A673 (cell line): ENCODE measurements at regions of chr5 and their contacts with region 1.

Region 1: GRCh38 chr5:108472237-108472636 is 90.3 kb upstream of the FBXL17 start:
- DNase-seq: no peak
- H3K4me3 ChIP-seq: no peak overlapping the region
- H3K27ac ChIP-seq: no peak overlapping the region
- H3K4me1 ChIP-seq: no peaks in the 10 kb centered on the region
- H3K27me3 ChIP-seq: no peaks in the 10 kb centered on the region
- CTCF ChIP-seq: no peak

Region 2: GRCh38 chr5:108260117-108260857 is 211.9 kb before region 1 on chr5:
- CTCF ChIA-PET with region 1: no interaction called
- POLR2A ChIA-PET with region 1: no interaction called
- intact Hi-C with region 1: loop called (anchors 10 kb)
- DNase-seq: peak; percentile 78
- H3K4me3 ChIP-seq: no peak overlapping the region
- H3K27ac ChIP-seq: no peak overlapping the region
- H3K4me1 ChIP-seq: no peaks in the 10 kb centered on the region
- H3K27me3 ChIP-seq: no peaks in the 10 kb centered on the region
- CTCF ChIP-seq: peak; percentile 93